Activated naive CD4-positive, alpha-beta T cell treated with anti-CD3 and anti-CD28 coated beads, Interleukin-2, amount 10 ng/mL, durations not matched to agents 7 days and 5 days (primary cell): ENCODE measurements at regions of chrX and their contacts with region 1.

Region 1: GRCh38 chrX:48937054-48937907 is 18.5 kb upstream of the PIM2 start:
- DNase-seq: peak; percentile 93
- H3K4me3 Mint-ChIP-seq: peak overlapping the region; percentile 66
- H3K27ac Mint-ChIP-seq: peak overlapping the region; percentile 98
- H3K4me1 Mint-ChIP-seq: peaks cover 84% of the 10 kb centered on the region
- H3K27me3 Mint-ChIP-seq: no peaks in the 10 kb centered on the region

Region 2: GRCh38 chrX:48606091-48606490 is 331.2 kb before region 1 on chrX:
- CTCF ChIA-PET with region 1: no interaction called
- DNase-seq: no peak
- H3K4me3 Mint-ChIP-seq: no peak overlapping the region
- H3K27ac Mint-ChIP-seq: no peak overlapping the region
- H3K4me1 Mint-ChIP-seq: no peaks in the 10 kb centered on the region
- H3K27me3 Mint-ChIP-seq: no peaks in the 10 kb centered on the region

Region 3: GRCh38 chrX:48911412-48912182 is 25.7 kb before region 1 on chrX and contains the start of gene SLC35A2:
- CTCF ChIA-PET with region 1: interaction called, 12 read pairs
- DNase-seq: peak; percentile 92
- H3K4me3 Mint-ChIP-seq: peak within 1 kb of the TSS; percentile 94
- H3K27ac Mint-ChIP-seq: peak within 1 kb of the TSS; percentile 92
- H3K4me1 Mint-ChIP-seq: peaks cover 52% of the 10 kb centered on the region
- H3K27me3 Mint-ChIP-seq: peaks cover 8% of the 10 kb centered on the region

Region 4: GRCh38 chrX:48918643-48919340 is 18.5 kb before region 1 on chrX and contains the start of gene PIM2:
- CTCF ChIA-PET with region 1: interaction called, 24 read pairs
- DNase-seq: peak; percentile 94
- H3K4me3 Mint-ChIP-seq: peak within 1 kb of the TSS; percentile 94
- H3K27ac Mint-ChIP-seq: peak within 1 kb of the TSS; percentile 95
- H3K4me1 Mint-ChIP-seq: peaks cover 53% of the 10 kb centered on the region
- H3K27me3 Mint-ChIP-seq: no peaks in the 10 kb centered on the region